ENCODE measurements at regions of chr5 and their contacts with region 1.

Region 1: GRCh38 chr5:73448463-73449136 is at the start of gene FOXD1:
- DNase-seq: peak in 4 of 9 experiments; percentile 32 to 64 (median 58)
- ATAC-seq: peak; percentile 25
- H3K4me3 ChIP-seq: peak within 1 kb of the TSS; percentile 41 to 54
- H3K4me3 Mint-ChIP-seq: peak within 1 kb of the TSS; percentile 86
- H3K27ac ChIP-seq: no peak within 1 kb of the TSS
- H3K27ac Mint-ChIP-seq: no peak within 1 kb of the TSS
- H3K4me1 ChIP-seq: peaks cover 19% of the 10 kb centered on the region
- H3K4me1 Mint-ChIP-seq: peaks cover 19% of the 10 kb centered on the region
- H3K27me3 ChIP-seq: peaks cover 71 to 82% of the 10 kb centered on the region in 2 experiments
- H3K27me3 Mint-ChIP-seq: peaks cover 69% of the 10 kb centered on the region
- CTCF ChIP-seq: no peak
- total RNA-seq, gene FOXD1: 0.35 TPM in 1 of 2 experiments, not detected in the other

Region 2: GRCh38 chr5:72955768-72956323 is 492.8 kb before region 1 on chr5 and contains the start of gene FCHO2:
- CTCF ChIA-PET with region 1: interaction called, 4 read pairs
- POLR2A ChIA-PET with region 1: no interaction called
- intact Hi-C with region 1: loop called (anchors 1 to 2 kb)
- DNase-seq: peak; percentile 88 to 98 (median 96)
- ATAC-seq: peak; percentile 90
- H3K4me3 ChIP-seq: peak within 1 kb of the TSS; percentile 61 to 95
- H3K4me3 Mint-ChIP-seq: peak within 1 kb of the TSS; percentile 95
- H3K27ac ChIP-seq: no peak within 1 kb of the TSS
- H3K27ac Mint-ChIP-seq: peak within 1 kb of the TSS; percentile 88
- H3K4me1 ChIP-seq: peaks cover 12% of the 10 kb centered on the region
- H3K4me1 Mint-ChIP-seq: peaks cover 15% of the 10 kb centered on the region
- H3K27me3 ChIP-seq: peaks cover 6 to 9% of the 10 kb centered on the region in 2 experiments
- H3K27me3 Mint-ChIP-seq: peaks cover 41% of the 10 kb centered on the region
- CTCF ChIP-seq: peak; percentile 65
- total RNA-seq, gene FCHO2: 2.4 to 2.9 TPM

Region 3: DNA sequence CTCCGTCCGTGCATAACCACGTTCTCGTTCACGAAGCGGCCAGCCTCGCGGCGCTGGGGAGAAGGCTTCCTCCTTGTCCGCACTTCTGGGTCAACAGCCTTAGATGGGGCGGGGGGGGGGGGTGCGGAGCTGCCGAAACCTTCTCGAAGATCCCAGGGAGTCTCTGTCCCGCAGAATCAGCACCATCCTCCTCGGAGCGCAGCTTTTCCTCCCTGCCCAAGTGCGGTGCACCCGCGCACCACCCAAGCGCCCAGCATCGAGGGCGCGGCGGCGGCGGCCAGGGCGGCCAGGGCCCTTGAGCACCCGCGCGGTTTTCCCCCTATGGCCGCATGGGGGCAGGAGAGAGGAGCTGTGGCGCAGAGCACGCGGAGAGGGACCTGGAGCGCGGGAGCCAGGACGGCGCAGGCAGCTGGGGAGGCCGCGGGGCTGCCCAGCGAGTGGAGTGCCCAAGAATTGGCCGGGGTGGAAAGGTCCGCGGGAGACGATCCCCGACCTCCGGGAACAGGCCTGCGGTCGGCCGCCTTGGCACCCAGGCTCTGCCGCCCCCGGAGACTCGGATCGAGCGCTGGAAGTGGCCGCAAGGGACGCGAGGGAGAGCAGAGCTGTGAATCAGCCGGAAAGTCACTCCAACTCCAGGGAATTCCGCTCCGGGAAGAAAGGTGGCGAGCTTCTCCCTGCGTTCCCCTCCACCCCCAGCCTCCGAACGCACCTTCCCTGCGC is 232.5 kb before region 1 on chr5:
- CTCF ChIA-PET with region 1: interaction called, 42 read pairs
- POLR2A ChIA-PET with region 1: no interaction called
- intact Hi-C with region 1: loop called (anchors 1 to 2 kb)
- DNase-seq: peak; percentile 36 to 77 (median 56)
- ATAC-seq: peak; percentile 95
- H3K4me3 ChIP-seq: peak overlapping the region; percentile 13 to 39
- H3K4me3 Mint-ChIP-seq: peak overlapping the region; percentile 69
- H3K27ac ChIP-seq: no peak overlapping the region
- H3K27ac Mint-ChIP-seq: no peak overlapping the region
- H3K4me1 ChIP-seq: peaks cover 9% of the 10 kb centered on the region
- H3K4me1 Mint-ChIP-seq: peaks cover 11% of the 10 kb centered on the region
- H3K27me3 ChIP-seq: peaks cover 15 to 27% of the 10 kb centered on the region in 2 experiments
- H3K27me3 Mint-ChIP-seq: peaks cover 76% of the 10 kb centered on the region
- CTCF ChIP-seq: peak; percentile 65

Region 4: DNA sequence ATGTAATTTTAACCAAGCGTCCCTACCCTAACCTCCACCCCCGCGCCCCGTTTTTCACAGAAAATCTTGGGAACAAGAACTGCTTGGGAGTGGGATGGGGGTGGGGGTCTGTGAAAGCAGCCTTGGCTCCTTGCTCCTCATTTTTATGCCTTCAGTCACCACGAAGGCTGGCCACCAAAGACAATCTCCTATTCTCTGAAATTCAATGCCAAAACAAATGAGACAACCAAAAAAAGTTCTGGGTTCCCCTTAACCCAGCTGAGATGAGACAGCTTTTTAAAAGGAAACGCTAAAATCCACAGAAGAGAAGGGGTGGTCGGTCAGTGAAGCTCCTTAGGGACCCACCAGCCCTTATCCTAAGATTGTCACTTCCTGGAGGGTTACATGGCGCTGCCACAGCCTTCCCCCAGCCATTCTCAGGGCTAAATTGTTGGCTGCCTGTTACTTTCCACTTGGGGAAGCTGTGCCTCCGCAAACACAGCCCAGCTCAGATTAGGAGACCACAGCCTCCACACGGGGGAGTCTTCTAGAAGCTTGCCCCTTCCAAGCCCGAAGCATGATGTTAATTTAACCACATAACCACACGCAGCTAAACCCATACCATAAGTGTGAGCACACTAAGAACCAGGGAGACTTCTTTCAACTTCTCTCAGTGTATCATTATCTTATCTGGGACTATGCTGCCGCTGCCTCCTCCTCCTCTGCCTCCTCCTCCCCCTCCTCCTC is 136.3 kb before region 1 on chr5:
- CTCF ChIA-PET with region 1: interaction called, 4 read pairs
- POLR2A ChIA-PET with region 1: no interaction called
- intact Hi-C with region 1: loop called (anchors 2 to 5 kb)
- DNase-seq: peak in 4 of 9 experiments; percentile 12 to 69 (median 46)
- ATAC-seq: peak; percentile 57
- H3K4me3 ChIP-seq: no peak overlapping the region
- H3K4me3 Mint-ChIP-seq: no peak overlapping the region
- H3K27ac ChIP-seq: no peak overlapping the region
- H3K27ac Mint-ChIP-seq: no peak overlapping the region
- H3K4me1 ChIP-seq: no peaks in the 10 kb centered on the region
- H3K4me1 Mint-ChIP-seq: peaks cover 10% of the 10 kb centered on the region
- H3K27me3 ChIP-seq: peaks cover 11 to 23% of the 10 kb centered on the region in 2 experiments
- H3K27me3 Mint-ChIP-seq: peaks cover 74% of the 10 kb centered on the region
- CTCF ChIP-seq: no peak

Region 5: DNA sequence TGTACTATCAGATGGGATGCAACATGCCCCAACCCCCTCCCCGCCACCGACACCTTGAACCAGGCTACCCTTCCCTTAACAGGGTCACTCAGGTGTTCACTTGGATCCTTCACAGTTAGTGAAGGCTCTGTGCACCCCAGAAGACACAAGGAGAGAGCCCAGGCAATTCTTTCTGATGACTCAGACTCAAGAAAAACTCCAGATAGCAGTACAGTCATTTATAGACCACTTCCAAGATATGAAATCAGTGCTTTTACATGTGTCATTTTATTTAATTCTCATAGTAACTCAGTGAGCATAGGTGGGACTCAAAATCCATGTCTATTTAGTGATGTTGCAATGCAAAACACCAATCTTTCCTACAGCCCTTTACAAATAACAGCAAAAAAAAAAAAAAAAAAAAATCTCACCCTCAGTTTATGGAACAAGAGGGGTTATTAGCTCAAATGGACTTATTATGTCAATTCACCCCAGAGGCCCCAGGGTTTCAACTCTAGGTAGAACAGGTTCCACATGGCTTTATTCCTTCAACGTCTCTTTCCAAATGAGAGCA is 71.9 kb before region 1 on chr5:
- CTCF ChIA-PET with region 1: no interaction called
- POLR2A ChIA-PET with region 1: no interaction called
- intact Hi-C with region 1: no loop called
- DNase-seq: no peak
- ATAC-seq: no peak
- H3K4me3 ChIP-seq: no peak overlapping the region
- H3K4me3 Mint-ChIP-seq: no peak overlapping the region
- H3K27ac ChIP-seq: no peak overlapping the region
- H3K27ac Mint-ChIP-seq: no peak overlapping the region
- H3K4me1 ChIP-seq: peaks cover 19% of the 10 kb centered on the region
- H3K4me1 Mint-ChIP-seq: peaks cover 18% of the 10 kb centered on the region
- H3K27me3 ChIP-seq: peaks cover 27 to 28% of the 10 kb centered on the region in 2 experiments
- H3K27me3 Mint-ChIP-seq: peaks cover 68% of the 10 kb centered on the region
- CTCF ChIP-seq: no peak

Region 6: GRCh38 chr5:73426034-73426433 is 22.6 kb before region 1 on chr5:
- CTCF ChIA-PET with region 1: interaction called, 11 read pairs
- POLR2A ChIA-PET with region 1: no interaction called
- intact Hi-C with region 1: no loop called
- DNase-seq: no peak
- ATAC-seq: no peak
- H3K4me3 ChIP-seq: no peak overlapping the region
- H3K4me3 Mint-ChIP-seq: no peak overlapping the region
- H3K27ac ChIP-seq: no peak overlapping the region
- H3K27ac Mint-ChIP-seq: no peak overlapping the region
- H3K4me1 ChIP-seq: no peaks in the 10 kb centered on the region
- H3K4me1 Mint-ChIP-seq: no peaks in the 10 kb centered on the region
- H3K27me3 ChIP-seq: peaks cover 7 to 9% of the 10 kb centered on the region in 2 experiments
- H3K27me3 Mint-ChIP-seq: peaks cover 47% of the 10 kb centered on the region
- CTCF ChIP-seq: no peak

Region 7: GRCh38 chr5:73471654-73472053 is 23.1 kb after region 1 on chr5:
- CTCF ChIA-PET with region 1: no interaction called
- POLR2A ChIA-PET with region 1: no interaction called
- intact Hi-C with region 1: no loop called
- DNase-seq: no peak
- ATAC-seq: no peak
- H3K4me3 ChIP-seq: no peak overlapping the region
- H3K4me3 Mint-ChIP-seq: no peak overlapping the region
- H3K27ac ChIP-seq: no peak overlapping the region
- H3K27ac Mint-ChIP-seq: no peak overlapping the region
- H3K4me1 ChIP-seq: no peaks in the 10 kb centered on the region
- H3K4me1 Mint-ChIP-seq: no peaks in the 10 kb centered on the region
- H3K27me3 ChIP-seq: peaks cover 0 to 5% of the 10 kb centered on the region in 2 experiments
- H3K27me3 Mint-ChIP-seq: peaks cover 26% of the 10 kb centered on the region
- CTCF ChIP-seq: no peak

Region 8: DNA sequence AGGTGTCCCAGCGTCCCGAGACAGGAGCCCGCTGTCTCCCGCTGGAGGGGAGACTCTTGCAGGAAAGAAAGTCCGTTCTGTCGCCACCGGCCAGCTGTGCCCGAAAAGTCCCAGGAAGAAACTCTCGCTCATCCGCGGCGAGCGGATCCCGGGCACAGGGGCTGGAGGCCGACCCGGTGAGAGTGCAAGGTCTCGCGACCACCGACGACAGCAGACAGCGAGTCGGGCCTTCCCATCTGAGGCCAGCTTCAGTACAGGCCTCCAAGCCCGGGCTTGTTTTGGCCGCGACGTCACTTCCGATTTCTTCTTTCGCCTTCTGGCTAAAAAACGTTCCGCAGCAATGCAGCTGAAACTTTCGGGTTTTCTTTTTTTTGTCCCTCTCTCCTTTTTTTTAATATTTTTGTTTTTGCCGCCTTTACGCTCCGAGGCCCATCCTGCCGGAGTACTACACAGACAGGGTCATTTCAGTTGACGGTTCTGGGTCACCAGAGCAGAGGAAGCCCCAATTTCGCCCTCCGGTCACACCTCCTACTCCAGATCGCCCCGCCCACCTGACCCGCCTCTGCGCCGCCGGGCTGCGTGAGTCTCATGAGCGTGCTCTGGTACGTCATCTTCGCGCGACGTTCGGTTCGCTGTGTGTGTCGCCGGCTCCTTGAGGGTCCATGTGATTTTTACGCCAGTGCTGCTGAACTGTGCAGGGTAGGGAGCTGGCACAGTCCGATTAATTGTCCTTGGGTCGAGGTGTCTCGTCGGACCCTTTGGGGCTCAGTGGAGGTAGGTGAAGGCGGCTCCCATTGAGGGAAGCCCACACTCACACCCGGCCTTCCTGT is 116.8 kb after region 1 on chr5 and contains the starts of genes ANKRA2 and UTP15:
- CTCF ChIA-PET with region 1: no interaction called
- POLR2A ChIA-PET with region 1: no interaction called
- intact Hi-C with region 1: loop called in 1 of 2 experiments (anchors 2 kb)
- DNase-seq: peak; percentile 97 to 100 (median 99)
- ATAC-seq: peak; percentile 96
- H3K4me3 ChIP-seq: peak within 1 kb of the TSS; percentile 72 to 81
- H3K4me3 Mint-ChIP-seq: peak within 1 kb of the TSS; percentile 100
- H3K27ac ChIP-seq: peak within 1 kb of the TSS; percentile 94 to 95
- H3K27ac Mint-ChIP-seq: peak within 1 kb of the TSS; percentile 100
- H3K4me1 ChIP-seq: peaks cover 26% of the 10 kb centered on the region
- H3K4me1 Mint-ChIP-seq: peaks cover 58% of the 10 kb centered on the region
- H3K27me3 ChIP-seq: no peaks in the 10 kb centered on the region
- H3K27me3 Mint-ChIP-seq: no peaks in the 10 kb centered on the region
- CTCF ChIP-seq: no peak
- total RNA-seq, gene ANKRA2: 43.4 to 44.1 TPM
- total RNA-seq, gene UTP15: 60.9 to 69.1 TPM

Region 9: DNA sequence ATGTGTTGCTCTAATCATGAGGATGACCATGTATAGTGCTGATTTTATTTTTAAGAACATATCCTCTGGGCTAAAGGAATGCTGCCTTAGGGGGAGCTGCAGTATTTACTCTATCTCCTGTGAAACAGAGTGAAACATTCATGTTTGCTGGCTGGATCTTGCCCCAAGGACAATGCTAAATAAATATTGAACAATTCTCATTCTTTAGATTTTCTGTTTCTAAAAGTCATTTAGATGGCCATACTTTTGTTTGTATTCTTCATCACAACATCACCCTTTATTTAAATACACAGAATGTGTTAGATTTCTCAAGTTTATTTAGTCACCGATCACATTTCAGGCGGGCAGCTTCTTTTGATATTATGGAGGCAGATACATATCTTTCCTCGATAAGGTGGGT is 280.7 kb after region 1 on chr5:
- CTCF ChIA-PET with region 1: no interaction called
- POLR2A ChIA-PET with region 1: no interaction called
- intact Hi-C with region 1: no loop called
- DNase-seq: no peak
- ATAC-seq: no peak
- H3K4me3 ChIP-seq: no peak overlapping the region
- H3K4me3 Mint-ChIP-seq: no peak overlapping the region
- H3K27ac ChIP-seq: no peak overlapping the region
- H3K27ac Mint-ChIP-seq: no peak overlapping the region
- H3K4me1 ChIP-seq: no peaks in the 10 kb centered on the region
- H3K4me1 Mint-ChIP-seq: no peaks in the 10 kb centered on the region
- H3K27me3 ChIP-seq: no peaks in the 10 kb centered on the region
- H3K27me3 Mint-ChIP-seq: peaks cover 7% of the 10 kb centered on the region
- CTCF ChIP-seq: no peak